Sigmoid colon (tissue), 7 donors: ENCODE measurements at regions of chr20 and their contacts with region 1.

Region 1: DNA sequence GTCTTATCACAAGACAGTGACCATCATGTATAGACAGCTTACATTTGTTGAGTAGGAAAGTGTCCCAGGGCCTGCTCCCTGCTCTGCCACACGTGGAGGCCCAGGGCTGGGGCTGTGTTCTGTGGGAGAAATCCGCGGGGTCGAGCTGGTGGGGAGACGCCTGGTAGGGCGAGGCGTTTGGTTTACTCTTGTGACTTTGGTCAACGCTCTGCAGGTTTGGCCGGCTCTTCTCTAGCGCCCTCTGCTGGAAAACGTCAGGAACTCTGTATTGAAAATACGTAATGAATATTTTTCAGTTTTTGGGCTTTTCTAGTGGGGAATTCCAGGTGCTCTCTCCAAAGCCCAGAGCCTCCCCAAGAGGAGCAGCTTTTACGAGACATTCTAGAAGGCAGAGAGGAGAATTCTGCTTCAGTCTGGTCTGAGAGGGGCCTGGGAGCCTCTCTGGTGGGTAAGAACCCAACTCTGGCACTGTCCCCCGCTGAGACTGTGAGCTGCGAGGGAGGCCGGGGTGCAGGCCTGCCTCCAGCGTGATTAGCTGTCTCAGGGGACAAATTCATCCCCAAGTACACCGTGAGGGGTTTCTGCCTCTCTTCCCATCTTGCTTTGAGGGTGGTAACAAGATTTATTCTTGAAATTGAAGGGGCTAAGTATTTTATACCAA is 112.6 kb upstream of the RALGAPA2 start:
- DNase-seq: peak; percentile 68
- H3K4me3 ChIP-seq: no peak overlapping the region
- H3K27ac ChIP-seq: no peak overlapping the region
- H3K4me1 ChIP-seq: no peaks in the 10 kb centered on the region
- H3K27me3 ChIP-seq: peaks cover 0 to 29% (median 0%) of the 10 kb centered on the region in 3 donors
- CTCF ChIP-seq: peak; percentile 9 to 59 (median 46)
- EP300 ChIP-seq: no peak
- POLR2A ChIP-seq: no peak

Region 2: GRCh38 chr20:20664795-20665589 is 160.1 kb before region 1 on chr20:
- intact Hi-C with region 1: loop called (anchors 5 kb)
- DNase-seq: no peak
- H3K4me3 ChIP-seq: no peak overlapping the region
- H3K27ac ChIP-seq: no peak overlapping the region
- H3K4me1 ChIP-seq: no peaks in the 10 kb centered on the region
- H3K27me3 ChIP-seq: no peaks in the 10 kb centered on the region
- CTCF ChIP-seq: no peak
- EP300 ChIP-seq: no peak
- POLR2A ChIP-seq: no peak